ENCODE measurements at regions of chr16 and their contacts with region 1.

Region 1: GRCh38 chr16:85615852-85616606 is 2.9 kb downstream of the GSE1 start:
- DNase-seq: peak; percentile 92
- H3K4me3 ChIP-seq: peak overlapping the region; percentile 86
- H3K27ac ChIP-seq: peak overlapping the region; percentile 9
- H3K4me1 ChIP-seq: peaks cover 60% of the 10 kb centered on the region
- H3K27me3 ChIP-seq: no peaks in the 10 kb centered on the region
- CTCF ChIP-seq: peak; percentile 97

Region 2: DNA sequence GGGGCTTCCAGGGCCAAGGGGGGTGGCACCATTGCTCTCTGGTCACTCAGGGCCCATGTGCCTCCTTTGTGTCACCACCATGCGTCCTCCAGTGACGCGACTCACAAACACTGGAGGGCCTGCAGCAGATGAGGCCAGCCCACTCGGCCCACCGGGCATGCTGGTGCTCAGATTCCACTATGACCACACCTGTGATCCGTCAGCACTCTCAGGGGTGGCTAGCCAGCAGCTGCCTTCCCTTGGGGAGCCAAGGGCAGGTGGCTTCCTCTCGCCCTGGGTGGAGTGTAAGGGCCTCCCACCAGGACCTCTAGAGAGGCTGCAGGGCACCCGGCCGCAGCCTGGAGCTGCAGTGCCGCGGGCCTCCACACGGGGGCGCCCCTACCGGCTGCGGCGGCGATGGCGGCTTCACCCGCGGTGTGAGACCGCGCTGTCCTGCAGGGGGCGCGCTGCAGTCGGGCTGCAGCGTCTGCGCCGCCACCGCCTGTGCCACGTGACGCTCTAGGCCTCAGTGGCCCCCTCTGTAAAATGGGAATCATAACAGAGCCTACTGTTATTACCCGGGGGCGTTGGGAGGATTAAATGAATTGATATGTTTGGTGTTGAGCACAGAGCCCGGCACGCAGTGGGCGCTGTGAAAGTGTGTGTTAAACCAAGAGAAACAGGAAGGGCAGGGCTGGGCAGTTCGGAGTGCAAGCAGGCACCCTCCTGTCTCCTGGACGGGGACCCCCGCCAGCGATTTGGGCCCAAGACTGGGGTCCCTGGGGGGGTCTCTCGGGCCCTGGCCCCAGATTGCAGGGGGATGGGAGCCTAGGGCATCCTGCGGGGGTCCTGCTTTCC is 195.3 kb before region 1 on chr16:
- CTCF ChIA-PET with region 1: interaction called, 33 read pairs
- POLR2A ChIA-PET with region 1: no interaction called
- intact Hi-C with region 1: no loop called
- DNase-seq: peak; percentile 73
- H3K4me3 ChIP-seq: no peak overlapping the region
- H3K27ac ChIP-seq: peak overlapping the region; percentile 41
- H3K4me1 ChIP-seq: peaks cover 26% of the 10 kb centered on the region
- H3K27me3 ChIP-seq: no peaks in the 10 kb centered on the region
- CTCF ChIP-seq: peak; percentile 99

Region 3: GRCh38 chr16:85473909-85474620 is 142.0 kb before region 1 on chr16:
- CTCF ChIA-PET with region 1: no interaction called
- POLR2A ChIA-PET with region 1: no interaction called
- intact Hi-C with region 1: no loop called
- DNase-seq: no peak
- H3K4me3 ChIP-seq: no peak overlapping the region
- H3K27ac ChIP-seq: no peak overlapping the region
- H3K4me1 ChIP-seq: no peaks in the 10 kb centered on the region
- H3K27me3 ChIP-seq: no peaks in the 10 kb centered on the region
- CTCF ChIP-seq: no peak

Region 4: GRCh38 chr16:85626191-85626981 is 10.4 kb after region 1 on chr16:
- CTCF ChIA-PET with region 1: interaction called, 40 read pairs
- POLR2A ChIA-PET with region 1: no interaction called
- intact Hi-C with region 1: no loop called
- DNase-seq: peak; percentile 91
- H3K4me3 ChIP-seq: peak overlapping the region; percentile 21
- H3K27ac ChIP-seq: peak overlapping the region; percentile 71
- H3K4me1 ChIP-seq: peaks cover 31% of the 10 kb centered on the region
- H3K27me3 ChIP-seq: no peaks in the 10 kb centered on the region
- CTCF ChIP-seq: no peak

Region 5: GRCh38 chr16:85652431-85653221 is 36.6 kb after region 1 on chr16:
- CTCF ChIA-PET with region 1: no interaction called
- POLR2A ChIA-PET with region 1: interaction called, 3 read pairs
- intact Hi-C with region 1: loop called (anchors 1 kb)
- DNase-seq: peak; percentile 90
- H3K4me3 ChIP-seq: no peak overlapping the region
- H3K27ac ChIP-seq: peak overlapping the region; percentile 63
- H3K4me1 ChIP-seq: peaks cover 51% of the 10 kb centered on the region
- H3K27me3 ChIP-seq: no peaks in the 10 kb centered on the region
- CTCF ChIP-seq: no peak

Measured in A673 (cell line).